ENCODE measurements at regions of chr17 and their contacts with region 1.

Region 1: GRCh38 chr17:64773836-64774761 is 112.0 kb upstream of the SMURF2 start:
- DNase-seq: no peak
- H3K4me3 Mint-ChIP-seq: no peak overlapping the region
- H3K27ac Mint-ChIP-seq: no peak overlapping the region
- H3K4me1 Mint-ChIP-seq: peaks cover 6% of the 10 kb centered on the region
- H3K27me3 Mint-ChIP-seq: peaks cover 4% of the 10 kb centered on the region

Region 2: GRCh38 chr17:64938925-64939474 is 164.9 kb after region 1 on chr17:
- intact Hi-C with region 1: loop called (anchors 10 kb)
- DNase-seq: no peak
- H3K4me3 Mint-ChIP-seq: no peak overlapping the region
- H3K27ac Mint-ChIP-seq: no peak overlapping the region
- H3K4me1 Mint-ChIP-seq: peaks cover 6% of the 10 kb centered on the region
- H3K27me3 Mint-ChIP-seq: peaks cover 2% of the 10 kb centered on the region